ENCODE measurements at regions of chr21 and their contacts with region 1.

Region 1: DNA sequence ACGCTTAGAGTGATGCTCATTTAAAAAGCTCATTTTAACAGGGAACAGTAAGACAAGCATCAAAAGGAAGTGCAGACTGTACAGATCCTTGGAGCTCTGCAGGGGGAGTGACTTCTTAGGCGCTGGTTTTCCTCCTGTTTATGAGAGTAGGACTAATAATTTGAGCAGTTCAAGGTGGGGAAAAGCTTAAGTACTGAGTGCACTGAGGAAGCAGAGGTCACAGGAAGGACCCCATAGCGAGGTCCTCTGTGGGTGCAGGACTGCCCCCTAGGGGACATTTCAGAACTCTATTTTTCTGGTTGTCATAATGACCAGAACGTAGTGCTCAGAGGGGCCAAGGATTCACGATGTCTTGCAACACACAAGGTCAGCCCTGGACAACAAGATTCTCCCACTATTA is 112.1 kb downstream of the HLCS start:
- DNase-seq: peak in 4 of 5 donors; percentile 30 to 41 (median 36)
- ATAC-seq: peak; percentile 51 to 85 (median 77)
- H3K4me3 ChIP-seq: no peak overlapping the region
- H3K27ac ChIP-seq: no peak overlapping the region
- H3K4me1 ChIP-seq: peaks cover 0 to 9% (median under 1%) of the 10 kb centered on the region in 12 donors
- H3K27me3 ChIP-seq: no peaks in the 10 kb centered on the region
- CTCF ChIP-seq: peak; percentile 55 to 76 (median 65)
- POLR2A ChIP-seq: no peak

Region 2: DNA sequence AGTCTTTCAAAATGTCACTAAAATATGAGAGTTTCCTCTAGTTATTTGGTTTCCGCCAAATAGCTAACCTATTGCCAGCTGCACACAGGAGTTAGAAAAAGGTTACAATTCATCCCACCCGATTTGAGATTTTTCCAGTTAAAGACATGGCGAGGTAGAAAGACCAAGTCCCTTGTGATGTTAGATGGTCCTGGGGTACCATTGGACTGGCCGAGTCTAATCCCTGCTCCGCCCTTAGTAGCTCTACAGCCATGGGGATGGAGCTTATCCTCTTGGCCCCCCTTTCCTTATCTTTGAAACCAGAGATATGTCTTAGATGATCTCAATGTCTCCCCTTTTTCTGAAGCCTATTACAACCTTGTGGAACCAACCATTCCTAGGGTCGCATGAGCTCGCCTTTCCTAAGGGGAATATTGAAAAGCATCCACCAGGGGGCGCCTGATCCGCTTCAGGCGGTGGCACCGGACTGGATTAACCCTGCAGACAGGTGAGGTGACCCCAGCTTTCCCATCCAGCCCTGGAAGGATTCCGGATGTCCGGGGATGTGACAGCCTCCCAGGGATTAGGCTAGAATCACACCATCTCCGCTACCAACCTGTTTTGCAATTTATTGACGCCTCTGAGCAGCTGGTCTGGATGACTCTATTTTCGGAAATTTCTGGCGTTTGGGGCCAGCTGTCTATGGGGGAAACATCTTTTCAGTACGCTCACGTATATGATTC is 223.7 kb before region 1 on chr21:
- intact Hi-C with region 1: loop called in 3 of 10 experiments (anchors 5 to 10 kb)
- DNase-seq: peak in 4 of 5 donors; percentile 36 to 75 (median 46)
- ATAC-seq: peak in 3 of 4 donors; percentile 37 to 53 (median 41)
- H3K4me3 ChIP-seq: no peak overlapping the region
- H3K27ac ChIP-seq: no peak overlapping the region
- H3K4me1 ChIP-seq: no peaks in the 10 kb centered on the region
- H3K27me3 ChIP-seq: peaks cover 0 to 45% (median 0%) of the 10 kb centered on the region in 9 donors
- CTCF ChIP-seq: peak; percentile 49 to 79 (median 72)
- POLR2A ChIP-seq: no peak

Region 3: GRCh38 chr21:36654324-36654723 is 200.1 kb before region 1 on chr21:
- intact Hi-C with region 1: loop called in 1 of 10 experiments (anchors 10 kb)
- DNase-seq: no peak
- ATAC-seq: no peak
- H3K4me3 ChIP-seq: no peak overlapping the region
- H3K27ac ChIP-seq: no peak overlapping the region
- H3K4me1 ChIP-seq: no peaks in the 10 kb centered on the region
- H3K27me3 ChIP-seq: peaks cover 0 to 24% (median 0%) of the 10 kb centered on the region in 9 donors
- CTCF ChIP-seq: no peak
- POLR2A ChIP-seq: no peak

Region 4: GRCh38 chr21:36747815-36748383 is 106.5 kb before region 1 on chr21:
- intact Hi-C with region 1: loop called (anchors 1 to 10 kb)
- DNase-seq: peak; percentile 39 to 71 (median 62)
- ATAC-seq: peak in 3 of 4 donors; percentile 49 to 77 (median 68)
- H3K4me3 ChIP-seq: peak overlapping the region; percentile 22 to 62 (median 56)
- H3K27ac ChIP-seq: peak overlapping the region in 1 of 12 donors; percentile 33
- H3K4me1 ChIP-seq: peaks cover 0 to 19% (median 5%) of the 10 kb centered on the region in 12 donors
- H3K27me3 ChIP-seq: peaks cover 0 to 29% (median 0%) of the 10 kb centered on the region in 9 donors
- CTCF ChIP-seq: peak in 4 of 12 donors; percentile 9 to 35 (median 26)
- POLR2A ChIP-seq: no peak

Region 5: GRCh38 chr21:36917471-36918158 is 63.2 kb after region 1 on chr21:
- intact Hi-C with region 1: loop called in 6 of 10 experiments (anchors 5 to 10 kb)
- DNase-seq: peak in 1 of 5 donors; percentile 30
- ATAC-seq: peak in 3 of 4 donors; percentile 52 to 72 (median 62)
- H3K4me3 ChIP-seq: no peak overlapping the region
- H3K27ac ChIP-seq: no peak overlapping the region
- H3K4me1 ChIP-seq: peaks cover 0 to 15% (median 0%) of the 10 kb centered on the region in 12 donors
- H3K27me3 ChIP-seq: no peaks in the 10 kb centered on the region
- CTCF ChIP-seq: peak; percentile 23 to 68 (median 53)
- POLR2A ChIP-seq: no peak

Measured in heart left ventricle (tissue), 16 donors.